Activated CD4-positive, alpha-beta T cell treated with anti-CD3 and anti-CD28 coated beads for 36 hours (primary cell): ENCODE measurements at regions of chr3 and their contacts with region 1.

Region 1: GRCh38 chr3:69200384-69201068 is 78.1 kb upstream of the LMOD3 start:
- DNase-seq: peak; percentile 80
- ATAC-seq: peak; percentile 44
- H3K4me3 Mint-ChIP-seq: peak overlapping the region; percentile 74
- H3K27ac Mint-ChIP-seq: peak overlapping the region; percentile 91
- H3K4me1 Mint-ChIP-seq: peaks cover 66% of the 10 kb centered on the region
- H3K27me3 Mint-ChIP-seq: peaks cover 3% of the 10 kb centered on the region

Region 2: GRCh38 chr3:69084326-69085167 is 116.0 kb before region 1 on chr3 and contains the start of gene ARL6IP5:
- CTCF ChIA-PET with region 1: no interaction called
- POLR2A ChIA-PET with region 1: interaction called, 4 read pairs
- intact Hi-C with region 1: loop called (anchors 2 kb)
- DNase-seq: peak; percentile 97
- ATAC-seq: peak; percentile 48
- H3K4me3 Mint-ChIP-seq: peak within 1 kb of the TSS; percentile 90
- H3K27ac Mint-ChIP-seq: peak within 1 kb of the TSS; percentile 97
- H3K4me1 Mint-ChIP-seq: peaks cover 59% of the 10 kb centered on the region
- H3K27me3 Mint-ChIP-seq: no peaks in the 10 kb centered on the region
- total RNA-seq, gene ARL6IP5: 60.4 to 76.0 TPM

Region 3: GRCh38 chr3:69104996-69105719 is 95.4 kb before region 1 on chr3:
- CTCF ChIA-PET with region 1: interaction called, 4 read pairs
- POLR2A ChIA-PET with region 1: interaction called, 10 read pairs
- intact Hi-C with region 1: no loop called
- DNase-seq: no peak
- ATAC-seq: no peak
- H3K4me3 Mint-ChIP-seq: no peak overlapping the region
- H3K27ac Mint-ChIP-seq: peak overlapping the region; percentile 42
- H3K4me1 Mint-ChIP-seq: peaks cover 38% of the 10 kb centered on the region
- H3K27me3 Mint-ChIP-seq: no peaks in the 10 kb centered on the region

Region 4: DNA sequence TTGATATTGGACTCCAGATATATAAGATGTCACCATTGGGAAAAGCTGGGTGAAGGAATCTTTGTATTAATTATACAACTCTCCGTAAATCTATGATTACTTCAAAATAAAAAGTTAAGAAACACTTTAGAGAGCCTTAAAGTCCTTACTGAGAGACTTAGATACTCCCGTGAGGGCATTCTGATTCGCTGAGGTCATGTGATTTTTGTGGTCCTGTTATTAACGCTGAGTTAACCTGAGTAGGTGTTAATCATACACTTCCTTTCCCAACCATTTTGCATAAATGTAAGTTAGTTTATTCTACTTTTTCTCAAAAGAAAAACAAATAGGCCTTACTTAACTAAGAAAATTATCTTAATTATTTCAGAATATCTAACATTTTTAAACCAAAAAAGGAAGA is 11.0 kb before region 1 on chr3:
- CTCF ChIA-PET with region 1: no interaction called
- POLR2A ChIA-PET with region 1: no interaction called
- intact Hi-C with region 1: no loop called
- DNase-seq: no peak
- ATAC-seq: no peak
- H3K4me3 Mint-ChIP-seq: no peak overlapping the region
- H3K27ac Mint-ChIP-seq: no peak overlapping the region
- H3K4me1 Mint-ChIP-seq: peaks cover 6% of the 10 kb centered on the region
- H3K27me3 Mint-ChIP-seq: no peaks in the 10 kb centered on the region

Region 5: GRCh38 chr3:69240651-69241568 is 40.4 kb after region 1 on chr3:
- CTCF ChIA-PET with region 1: no interaction called
- POLR2A ChIA-PET with region 1: no interaction called
- intact Hi-C with region 1: loop called in 1 of 2 experiments (anchors 5 kb)
- DNase-seq: no peak
- ATAC-seq: no peak
- H3K4me3 Mint-ChIP-seq: no peak overlapping the region
- H3K27ac Mint-ChIP-seq: no peak overlapping the region
- H3K4me1 Mint-ChIP-seq: peaks cover 24% of the 10 kb centered on the region
- H3K27me3 Mint-ChIP-seq: no peaks in the 10 kb centered on the region

Region 6: DNA sequence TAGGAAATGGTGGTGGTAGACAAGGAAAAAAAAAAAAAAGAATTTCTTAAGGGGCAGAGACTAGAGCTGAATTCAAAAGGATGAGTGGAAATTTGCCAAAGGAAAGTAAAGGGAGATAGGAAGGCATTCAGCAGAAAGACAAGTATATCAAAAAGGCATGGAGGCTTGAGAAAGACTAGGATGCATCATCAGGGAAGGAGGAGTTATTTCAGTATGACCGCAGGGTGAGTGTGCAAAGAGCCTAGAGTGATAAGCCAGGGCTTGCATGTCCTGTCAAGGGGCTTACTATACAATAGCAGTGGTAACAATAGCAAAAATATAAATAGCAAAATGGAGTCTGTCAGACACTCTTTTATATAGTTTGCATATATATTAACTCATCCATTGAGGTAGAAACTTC is 73.4 kb after region 1 on chr3:
- CTCF ChIA-PET with region 1: no interaction called
- POLR2A ChIA-PET with region 1: no interaction called
- intact Hi-C with region 1: no loop called
- DNase-seq: no peak
- ATAC-seq: no peak
- H3K4me3 Mint-ChIP-seq: no peak overlapping the region
- H3K27ac Mint-ChIP-seq: no peak overlapping the region
- H3K4me1 Mint-ChIP-seq: no peaks in the 10 kb centered on the region
- H3K27me3 Mint-ChIP-seq: peaks cover 4% of the 10 kb centered on the region

Region 7: GRCh38 chr3:69324362-69325025 is 124.0 kb after region 1 on chr3:
- CTCF ChIA-PET with region 1: no interaction called
- POLR2A ChIA-PET with region 1: no interaction called
- intact Hi-C with region 1: loop called in 1 of 2 experiments (anchors 1 kb)
- DNase-seq: peak; percentile 15
- ATAC-seq: peak; percentile 34
- H3K4me3 Mint-ChIP-seq: no peak overlapping the region
- H3K27ac Mint-ChIP-seq: peak overlapping the region; percentile 43
- H3K4me1 Mint-ChIP-seq: peaks cover 45% of the 10 kb centered on the region
- H3K27me3 Mint-ChIP-seq: no peaks in the 10 kb centered on the region

Region 8: DNA sequence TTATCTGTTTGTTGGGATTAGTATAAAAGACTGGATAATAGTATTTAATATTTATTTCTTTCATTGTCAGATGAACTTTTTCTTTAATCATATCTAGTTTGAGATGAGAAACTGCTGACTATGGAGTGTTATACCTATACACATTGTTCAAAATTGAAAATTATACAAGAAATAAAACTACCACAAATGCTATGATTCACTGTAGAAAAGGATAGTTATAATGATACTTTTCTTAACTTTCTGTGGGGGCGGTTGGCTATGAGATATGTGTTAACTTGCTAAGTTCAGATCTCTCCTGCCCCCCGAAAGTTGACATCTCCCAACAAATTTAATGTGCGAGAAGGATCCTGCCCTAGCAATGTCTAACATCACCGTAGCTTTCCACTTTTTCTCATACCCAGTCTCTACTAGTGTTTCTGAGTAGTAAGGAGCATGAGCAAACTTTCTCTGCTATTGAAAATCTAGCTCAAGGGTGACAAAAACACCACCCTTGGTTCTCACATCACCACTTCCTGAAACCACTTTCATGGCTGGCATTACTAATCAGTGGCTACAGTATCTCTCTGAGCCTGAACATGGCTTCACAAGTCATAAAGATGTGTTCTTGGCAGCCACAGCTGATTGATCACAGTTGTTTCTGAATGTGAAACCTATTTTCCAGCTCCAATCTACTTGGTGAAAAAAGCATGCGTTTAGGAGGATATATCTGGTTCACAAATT is 783.2 kb after region 1 on chr3:
- CTCF ChIA-PET with region 1: no interaction called
- POLR2A ChIA-PET with region 1: no interaction called
- intact Hi-C with region 1: loop called in 1 of 2 experiments (anchors 5 kb)
- DNase-seq: peak; percentile 40
- ATAC-seq: peak; percentile 96
- H3K4me3 Mint-ChIP-seq: no peak overlapping the region
- H3K27ac Mint-ChIP-seq: no peak overlapping the region
- H3K4me1 Mint-ChIP-seq: peaks cover 7% of the 10 kb centered on the region
- H3K27me3 Mint-ChIP-seq: peaks cover 22% of the 10 kb centered on the region